PC-3 (cell line): ENCODE measurements at regions of chr2 and their contacts with region 1.

Region 1: DNA sequence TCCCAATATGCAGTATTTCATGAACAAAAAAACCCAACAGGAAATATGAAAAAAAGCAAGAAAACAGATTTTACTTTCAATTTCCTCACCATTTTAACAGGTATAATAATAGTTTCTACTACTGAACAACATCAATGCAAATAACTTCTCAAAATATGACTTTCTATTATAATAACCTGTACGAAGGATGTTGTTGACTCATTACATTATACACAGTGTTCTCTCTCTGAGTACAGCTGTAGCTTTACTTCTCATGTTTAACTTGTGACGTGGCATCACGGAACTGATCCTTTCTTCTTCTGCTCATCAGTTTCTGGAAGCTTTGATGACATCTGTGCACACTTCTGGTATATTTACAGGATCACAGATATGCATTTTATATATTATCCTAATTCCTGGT is 40.0 kb downstream of the FAM228A start:
- DNase-seq: no peak
- ATAC-seq: no peak
- H3K4me3 ChIP-seq: no peak overlapping the region
- H3K27ac ChIP-seq: no peak overlapping the region
- H3K4me1 ChIP-seq: no peaks in the 10 kb centered on the region
- H3K27me3 ChIP-seq: no peaks in the 10 kb centered on the region
- CTCF ChIP-seq: no peak

Region 2: DNA sequence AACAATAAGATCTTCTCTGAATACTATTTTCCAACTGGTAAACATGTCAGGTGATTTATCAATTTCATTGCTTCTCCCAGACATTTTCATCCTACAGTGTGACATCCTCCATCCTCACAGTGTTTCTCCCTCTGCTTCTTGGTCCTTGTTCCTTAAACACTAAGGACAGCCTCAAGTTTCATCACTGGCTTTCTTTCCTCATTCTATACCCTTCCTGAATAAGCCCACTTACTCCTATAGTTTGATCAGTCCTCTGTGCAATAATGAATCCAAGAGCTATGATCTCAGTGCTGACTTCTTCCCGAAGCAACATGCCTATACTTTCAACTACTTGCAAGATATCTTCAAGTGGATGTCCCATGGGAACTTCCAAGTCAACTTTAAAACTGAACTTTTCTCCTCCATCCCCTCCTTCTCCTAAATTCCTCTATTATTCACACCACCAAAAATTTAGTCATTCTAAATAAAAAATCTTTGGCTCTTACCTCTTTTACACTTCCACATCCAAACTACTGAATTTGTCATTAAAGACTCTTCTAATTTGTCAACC is 47.6 kb after region 1 on chr2:
- CTCF ChIA-PET with region 1: no interaction called
- POLR2A ChIA-PET with region 1: interaction called, 11 read pairs
- intact Hi-C with region 1: no loop called
- DNase-seq: no peak
- ATAC-seq: no peak
- H3K4me3 ChIP-seq: no peak overlapping the region
- H3K27ac ChIP-seq: no peak overlapping the region
- H3K4me1 ChIP-seq: no peaks in the 10 kb centered on the region; the same call in 1 of the 2 replicates
- H3K27me3 ChIP-seq: no peaks in the 10 kb centered on the region
- CTCF ChIP-seq: no peak